Activated CD8-positive, alpha-beta memory T cell treated with anti-CD3 and anti-CD28 coated beads, Interleukin-2, amount 10 ng/mL, durations not matched to agents 7 days and 5 days (primary cell): ENCODE measurements at regions of chr1 and their contacts with region 1.

Region 1: DNA sequence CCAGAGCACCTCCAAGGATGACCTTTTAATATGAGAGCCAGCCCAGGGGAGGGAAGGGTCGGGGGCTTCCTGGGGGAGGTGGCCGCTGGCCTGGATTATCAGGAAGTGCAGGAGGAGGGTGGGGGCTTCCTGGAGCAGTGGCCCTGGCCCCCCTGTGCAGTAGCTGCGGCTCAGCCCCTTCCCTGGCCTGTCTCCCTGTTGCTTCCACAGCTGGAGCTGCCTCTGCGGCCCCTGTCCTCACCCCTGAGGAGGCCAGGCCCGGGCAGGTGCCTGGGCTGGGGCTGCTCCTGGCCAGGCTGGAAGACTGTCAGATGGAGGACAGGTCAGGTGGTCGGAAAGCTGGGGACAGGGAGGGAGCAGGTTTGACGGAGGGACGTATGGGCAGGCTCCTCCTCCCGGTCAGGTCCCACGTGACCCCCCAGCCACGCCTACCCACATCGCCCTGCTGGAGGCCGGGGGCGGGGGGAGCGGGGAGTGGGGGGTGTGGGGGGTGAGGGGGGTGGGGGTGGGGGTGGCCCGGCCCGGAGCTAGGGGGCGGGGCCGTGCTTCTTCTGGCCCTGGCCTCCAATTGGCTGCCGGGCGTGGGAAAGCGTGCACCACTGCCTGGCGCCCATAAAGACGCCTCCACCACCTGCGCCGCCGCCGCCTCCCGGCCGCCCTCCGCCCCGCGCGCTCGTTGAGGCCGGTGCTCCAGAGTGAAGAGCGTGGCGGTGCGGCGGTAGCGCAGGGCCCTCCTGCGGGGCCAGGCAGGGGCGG is 10.2 kb upstream of the TNFRSF14 start:
- DNase-seq: peak; percentile 95
- ATAC-seq: peak; percentile 52
- H3K4me3 Mint-ChIP-seq: peak overlapping the region; percentile 82
- H3K27ac Mint-ChIP-seq: peak overlapping the region; percentile 98
- H3K4me1 Mint-ChIP-seq: peaks cover 19% of the 10 kb centered on the region
- H3K27me3 Mint-ChIP-seq: peaks cover 13% of the 10 kb centered on the region

Region 2: GRCh38 chr1:2194898-2195673 is 350.9 kb before region 1 on chr1:
- CTCF ChIA-PET with region 1: interaction called, 19 read pairs
- DNase-seq: peak; percentile 93
- ATAC-seq: peak; percentile 80
- H3K4me3 Mint-ChIP-seq: peak overlapping the region; percentile 73
- H3K27ac Mint-ChIP-seq: peak overlapping the region; percentile 89
- H3K4me1 Mint-ChIP-seq: peaks cover 35% of the 10 kb centered on the region
- H3K27me3 Mint-ChIP-seq: no peaks in the 10 kb centered on the region

Region 3: GRCh38 chr1:2429780-2430591 is 116.0 kb before region 1 on chr1:
- CTCF ChIA-PET with region 1: interaction called, 13 read pairs
- DNase-seq: no peak
- ATAC-seq: no peak
- H3K4me3 Mint-ChIP-seq: no peak overlapping the region
- H3K27ac Mint-ChIP-seq: no peak overlapping the region
- H3K4me1 Mint-ChIP-seq: no peaks in the 10 kb centered on the region
- H3K27me3 Mint-ChIP-seq: no peaks in the 10 kb centered on the region

Region 4: GRCh38 chr1:2474933-2475371 is 71.0 kb before region 1 on chr1:
- CTCF ChIA-PET with region 1: no interaction called
- DNase-seq: no peak
- ATAC-seq: no peak
- H3K4me3 Mint-ChIP-seq: no peak overlapping the region
- H3K27ac Mint-ChIP-seq: no peak overlapping the region
- H3K4me1 Mint-ChIP-seq: no peaks in the 10 kb centered on the region
- H3K27me3 Mint-ChIP-seq: no peaks in the 10 kb centered on the region

Region 5: GRCh38 chr1:2556277-2556677 is 10.3 kb after region 1 on chr1 and contains the start of gene TNFRSF14:
- CTCF ChIA-PET with region 1: interaction called, 15 read pairs
- DNase-seq: peak; percentile 91
- ATAC-seq: peak; percentile 72
- H3K4me3 Mint-ChIP-seq: peak within 1 kb of the TSS; percentile 98
- H3K27ac Mint-ChIP-seq: peak within 1 kb of the TSS; percentile 99
- H3K4me1 Mint-ChIP-seq: peaks cover 33% of the 10 kb centered on the region
- H3K27me3 Mint-ChIP-seq: no peaks in the 10 kb centered on the region
- total RNA-seq, gene TNFRSF14: 106 to 111 TPM

Region 6: GRCh38 chr1:2575801-2576663 is 30.1 kb after region 1 on chr1:
- CTCF ChIA-PET with region 1: interaction called, 10 read pairs
- DNase-seq: no peak
- ATAC-seq: no peak
- H3K4me3 Mint-ChIP-seq: no peak overlapping the region
- H3K27ac Mint-ChIP-seq: no peak overlapping the region
- H3K4me1 Mint-ChIP-seq: peaks cover 43% of the 10 kb centered on the region
- H3K27me3 Mint-ChIP-seq: peaks cover 3% of the 10 kb centered on the region

Region 7: DNA sequence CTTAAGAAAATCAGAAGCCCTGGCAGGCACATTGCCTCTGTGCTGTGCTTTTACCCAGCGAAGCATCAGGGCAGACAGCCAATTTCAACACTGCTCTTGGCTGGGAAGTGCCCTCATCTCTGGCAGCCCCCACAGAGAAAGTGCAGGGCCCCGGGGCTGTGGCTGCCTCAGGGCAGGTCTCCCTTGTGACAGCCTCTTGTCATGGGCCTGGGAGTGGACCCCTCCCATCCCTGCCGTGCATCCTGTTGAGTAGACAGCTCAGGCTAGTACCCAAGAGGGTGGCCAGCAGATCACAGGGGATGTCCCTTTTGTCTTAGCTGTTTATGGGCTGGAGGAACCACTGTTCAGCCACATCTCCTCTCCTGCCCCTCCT is 232.3 kb after region 1 on chr1:
- CTCF ChIA-PET with region 1: no interaction called
- DNase-seq: no peak
- ATAC-seq: no peak
- H3K4me3 Mint-ChIP-seq: no peak overlapping the region
- H3K27ac Mint-ChIP-seq: no peak overlapping the region
- H3K4me1 Mint-ChIP-seq: no peaks in the 10 kb centered on the region
- H3K27me3 Mint-ChIP-seq: peaks cover 20% of the 10 kb centered on the region